ENCODE measurements at regions of chr13 and their contacts with region 1.

Region 1: GRCh38 chr13:43905435-43906031 is 25.8 kb downstream of the LACC1 start:
- DNase-seq: no peak
- ATAC-seq: peak; percentile 74

Region 2: GRCh38 chr13:43933378-43933777 is 27.8 kb after region 1 on chr13:
- intact Hi-C with region 1: no loop called
- DNase-seq: no peak
- ATAC-seq: no peak

Region 3: DNA sequence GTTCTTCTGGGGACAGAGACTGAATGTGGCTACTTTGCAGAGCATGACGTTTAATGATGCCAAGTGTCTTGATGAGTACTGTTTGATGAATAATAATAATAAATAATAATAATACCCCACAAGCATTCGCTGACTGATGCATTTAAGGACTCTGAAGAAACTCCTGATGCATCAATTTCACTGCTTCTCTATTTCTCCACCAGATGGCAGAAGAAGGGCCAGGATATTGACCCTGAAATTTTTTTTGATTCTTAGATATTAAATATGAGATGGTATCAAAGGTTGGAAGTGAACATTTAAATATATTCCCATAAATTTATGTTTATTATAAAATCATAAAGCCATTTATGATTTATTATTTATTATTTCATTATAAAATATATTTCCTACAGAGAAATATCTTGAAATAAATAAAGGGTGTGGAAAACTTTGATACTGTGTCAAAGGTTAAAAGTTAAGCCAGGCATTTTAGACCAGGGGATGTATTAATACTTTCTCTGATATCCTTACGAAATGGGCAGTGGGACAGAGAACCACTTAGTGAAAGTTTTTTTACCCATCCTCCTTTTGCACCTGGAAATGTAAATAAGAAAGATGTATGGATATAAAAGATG is 145.0 kb after region 1 on chr13:
- intact Hi-C with region 1: loop called (anchors 5 kb)
- DNase-seq: no peak
- ATAC-seq: peak; percentile 41

Region 4: DNA sequence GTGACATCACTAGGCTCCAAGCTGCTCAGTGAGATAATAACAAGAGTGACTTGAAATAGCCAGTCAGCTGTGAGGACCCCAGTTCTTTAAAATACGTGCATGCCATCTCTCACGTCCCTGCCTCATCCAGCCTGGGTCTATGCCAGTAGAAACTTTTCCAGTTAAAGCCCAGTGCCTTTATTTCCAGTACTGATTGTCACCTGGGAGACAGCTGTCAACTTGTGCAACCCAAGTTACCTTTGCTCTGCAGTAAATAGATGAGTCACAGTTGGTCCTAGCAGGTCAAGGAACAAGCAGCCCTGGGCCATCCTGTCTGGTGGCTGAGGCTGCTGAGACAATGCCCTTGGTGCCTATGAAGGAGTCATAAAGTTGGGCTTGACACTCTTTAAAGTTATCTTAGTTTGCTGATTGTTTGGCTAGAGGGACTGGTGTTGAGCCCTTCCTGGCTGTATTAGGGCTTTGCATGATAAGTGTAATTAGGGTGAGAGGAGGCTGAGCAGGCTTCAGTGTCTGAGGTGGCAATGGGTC is 202.9 kb after region 1 on chr13:
- intact Hi-C with region 1: loop called (anchors 10 kb)
- DNase-seq: peak; percentile 65
- ATAC-seq: peak; percentile 88

Region 5: DNA sequence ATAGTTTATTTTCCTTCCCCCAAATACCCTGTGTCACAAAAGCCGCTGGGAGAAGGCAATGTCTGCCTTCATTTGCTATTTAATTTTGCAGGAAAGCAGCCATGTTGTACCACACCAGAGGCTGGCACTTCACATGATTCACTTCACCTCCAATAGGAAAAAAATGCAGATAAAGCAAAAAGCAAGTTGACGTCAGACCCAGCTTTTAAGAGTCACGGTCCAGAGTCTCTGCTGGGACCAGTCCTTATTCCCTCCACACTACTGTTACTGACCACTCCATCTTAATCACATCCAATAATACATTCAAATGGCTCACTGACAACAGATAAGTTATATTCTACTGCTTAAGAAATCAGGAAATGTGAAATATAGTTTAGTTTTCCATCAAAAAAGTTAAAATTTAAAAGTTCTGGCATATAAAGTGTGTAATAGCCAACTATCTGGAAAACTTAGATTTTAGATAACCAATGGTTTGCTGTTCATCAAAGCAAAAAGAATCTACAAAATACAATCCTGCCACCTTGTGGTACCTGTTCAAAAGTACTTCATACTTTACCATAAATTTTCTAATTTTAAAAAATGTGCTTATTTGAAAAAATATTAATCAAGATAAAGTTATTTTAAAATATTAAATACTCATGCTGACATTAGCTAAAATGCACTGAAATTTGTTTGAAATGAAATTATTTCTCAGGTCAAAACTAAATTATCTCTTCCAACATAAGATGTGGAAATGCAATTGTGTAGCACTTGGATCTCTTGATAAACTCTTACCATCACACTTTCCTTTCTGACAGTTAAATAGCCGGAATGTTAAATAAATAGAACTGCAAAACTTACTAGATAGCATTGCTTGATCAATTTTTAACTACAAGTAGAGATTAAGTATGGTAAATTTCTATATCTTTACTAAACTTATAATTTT is 565.4 kb after region 1 on chr13:
- intact Hi-C with region 1: loop called (anchors 5 kb)
- DNase-seq: no peak
- ATAC-seq: no peak